ENCODE measurements at regions of chr10 and their contacts with region 1.

Region 1: DNA sequence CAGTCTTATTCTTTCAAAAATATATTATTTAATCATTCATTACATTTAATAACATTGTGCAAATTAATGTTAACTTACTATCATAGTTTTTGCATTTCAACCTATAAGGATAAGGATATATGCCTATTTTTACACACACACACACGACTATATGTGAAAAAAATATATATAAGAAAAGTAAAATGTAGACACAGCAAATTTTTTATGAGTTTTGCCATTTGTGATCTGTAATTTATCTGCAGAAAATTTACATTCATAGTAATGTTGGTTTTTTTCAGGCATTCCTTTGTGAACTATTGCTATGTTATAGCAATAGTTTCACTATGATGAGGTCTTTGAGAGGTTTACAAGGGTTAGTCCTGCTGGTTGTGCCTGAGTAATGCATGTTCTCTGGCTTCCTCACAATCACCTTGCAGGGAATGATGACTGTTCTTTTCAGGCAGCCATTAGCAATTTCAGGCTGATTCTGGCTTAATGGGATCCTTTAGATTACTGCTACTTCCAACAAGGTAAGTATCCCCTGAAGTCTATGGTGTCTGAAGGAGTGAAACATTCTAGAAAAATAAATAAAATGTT is 183.7 kb upstream of the CDK1 start:
- DNase-seq: no peak
- ATAC-seq: no peak
- H3K4me3 ChIP-seq: no peak overlapping the region
- H3K27ac ChIP-seq: no peak overlapping the region
- H3K4me1 ChIP-seq: no peaks in the 10 kb centered on the region
- H3K27me3 ChIP-seq: no peaks in the 10 kb centered on the region
- CTCF ChIP-seq: no peak; the same call in 1 of the 2 replicates

Region 2: DNA sequence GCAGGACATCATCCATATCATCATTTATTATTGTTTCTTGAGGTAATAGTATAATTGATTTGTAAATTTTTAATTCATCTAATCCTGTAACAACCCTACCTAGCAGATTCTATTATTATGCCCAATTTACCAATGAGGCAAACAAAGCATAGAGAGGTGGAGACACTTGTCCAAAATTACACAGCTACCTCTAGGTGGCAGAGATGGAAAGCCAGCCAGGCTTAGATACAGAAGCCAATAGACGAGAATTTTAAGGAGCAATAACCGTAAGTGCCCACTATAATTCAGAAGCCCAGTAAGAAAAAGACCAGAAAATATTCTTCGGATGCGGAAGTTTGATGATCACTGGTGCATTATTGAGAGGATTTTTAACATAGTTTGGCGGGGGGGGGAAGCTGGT is 258.9 kb before region 1 on chr10:
- CTCF ChIA-PET with region 1: no interaction called
- POLR2A ChIA-PET with region 1: no interaction called
- in situ Hi-C with region 1: no loop called
- intact Hi-C with region 1: no loop called
- DNase-seq: no peak
- ATAC-seq: no peak
- H3K4me3 ChIP-seq: no peak overlapping the region
- H3K27ac ChIP-seq: no peak overlapping the region
- H3K4me1 ChIP-seq: no peaks in the 10 kb centered on the region
- H3K27me3 ChIP-seq: no peaks in the 10 kb centered on the region
- CTCF ChIP-seq: peak; percentile 44

Region 3: GRCh38 chr10:60564475-60564874 is 30.1 kb before region 1 on chr10:
- CTCF ChIA-PET with region 1: no interaction called
- POLR2A ChIA-PET with region 1: no interaction called
- in situ Hi-C with region 1: no loop called
- intact Hi-C with region 1: loop called (anchors 1 kb)
- DNase-seq: no peak
- ATAC-seq: no peak
- H3K4me3 ChIP-seq: no peak overlapping the region
- H3K27ac ChIP-seq: no peak overlapping the region
- H3K4me1 ChIP-seq: no peaks in the 10 kb centered on the region
- H3K27me3 ChIP-seq: no peaks in the 10 kb centered on the region
- CTCF ChIP-seq: no peak